ENCODE measurements at regions of chr9 and their contacts with region 1.

Region 1: DNA sequence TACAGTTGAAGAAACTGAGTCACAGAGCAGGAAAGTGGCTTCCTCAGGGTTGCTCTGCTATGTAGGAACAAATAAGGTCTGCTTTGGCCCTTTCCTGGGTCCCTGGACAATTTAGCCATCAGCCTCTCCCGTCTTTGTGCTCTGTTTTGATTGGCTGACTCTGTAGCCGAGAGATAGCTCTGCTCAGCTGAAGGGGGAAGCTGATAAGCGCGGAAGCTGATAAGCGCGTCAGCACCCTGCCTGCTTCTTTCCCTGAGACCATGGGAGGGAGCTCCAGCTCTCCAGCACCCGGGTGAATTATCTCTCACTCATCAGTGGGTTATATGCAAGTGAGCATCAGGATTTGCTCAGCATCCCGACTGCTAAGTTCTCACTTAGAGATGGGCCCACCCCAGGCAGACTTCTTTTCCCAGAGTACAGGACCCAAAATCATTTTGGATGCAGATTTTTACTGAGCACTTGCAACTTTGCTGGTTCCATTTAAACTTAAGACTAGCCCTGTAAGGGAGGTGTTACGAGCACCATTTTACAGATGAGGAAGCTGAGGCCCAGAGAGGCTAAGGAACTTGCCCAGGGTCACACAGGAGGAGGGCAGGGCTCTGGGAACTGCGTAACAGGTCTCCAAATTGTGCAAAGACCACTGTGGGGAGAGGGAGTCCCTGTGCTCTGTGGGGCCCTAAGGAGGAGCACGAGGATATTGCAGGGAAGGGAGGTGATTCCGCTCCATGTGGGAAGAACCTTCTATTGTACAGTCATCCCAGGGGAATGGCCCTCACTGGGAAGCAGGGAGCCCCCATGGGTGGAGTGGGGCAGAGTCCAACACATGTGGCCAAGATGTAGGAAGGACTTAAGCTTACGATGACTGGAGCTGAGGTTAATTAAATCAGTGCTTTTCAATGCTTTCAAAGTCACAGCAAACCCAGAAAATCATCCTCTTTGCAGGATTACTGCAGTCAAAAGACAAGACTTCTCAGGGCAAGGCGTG is 83.7 kb upstream of the ORM1 start:
- DNase-seq: peak; percentile 51
- H3K4me3 ChIP-seq: no peak overlapping the region
- H3K27ac ChIP-seq: no peak overlapping the region
- H3K4me1 ChIP-seq: peaks cover 8% of the 10 kb centered on the region
- H3K27me3 ChIP-seq: no peaks in the 10 kb centered on the region
- CTCF ChIP-seq: peak in 1 of 2 donors; percentile 50
- POLR2A ChIP-seq: no peak

Region 2: GRCh38 chr9:114216081-114216480 is 23.1 kb before region 1 on chr9:
- CTCF ChIA-PET with region 1: interaction called, 12 read pairs
- POLR2A ChIA-PET with region 1: no interaction called
- dilution Hi-C with region 1: no loop called
- intact Hi-C with region 1: no loop called
- DNase-seq: peak; percentile 77
- H3K4me3 ChIP-seq: no peak overlapping the region
- H3K27ac ChIP-seq: no peak overlapping the region
- H3K4me1 ChIP-seq: peaks cover 18% of the 10 kb centered on the region
- H3K27me3 ChIP-seq: no peaks in the 10 kb centered on the region
- CTCF ChIP-seq: no peak
- POLR2A ChIP-seq: no peak

Region 3: DNA sequence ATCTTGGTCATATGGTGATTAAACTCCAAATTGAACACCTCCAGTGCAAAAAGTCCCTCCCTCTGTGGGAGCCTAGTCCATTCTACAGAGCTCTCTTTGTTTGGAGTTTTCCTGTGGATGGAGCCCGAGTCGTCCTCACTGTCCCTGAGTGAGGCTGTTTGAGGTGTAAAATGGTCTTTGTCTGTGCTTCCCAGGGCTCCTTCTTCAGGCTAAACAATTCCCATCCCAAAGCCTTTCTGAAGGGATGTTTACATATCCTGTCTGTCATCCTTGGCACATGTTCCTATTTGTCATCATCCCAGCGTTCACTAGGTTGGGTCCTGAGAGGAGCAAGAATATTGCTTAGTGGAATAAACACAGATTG is 15.0 kb before region 1 on chr9:
- CTCF ChIA-PET with region 1: interaction called, 11 read pairs
- POLR2A ChIA-PET with region 1: no interaction called
- dilution Hi-C with region 1: no loop called
- intact Hi-C with region 1: no loop called
- DNase-seq: peak; percentile 51
- H3K4me3 ChIP-seq: no peak overlapping the region
- H3K27ac ChIP-seq: peak overlapping the region; percentile 91
- H3K4me1 ChIP-seq: peaks cover 69% of the 10 kb centered on the region
- H3K27me3 ChIP-seq: no peaks in the 10 kb centered on the region
- CTCF ChIP-seq: no peak
- POLR2A ChIP-seq: peak; percentile 26

Region 4: GRCh38 chr9:114285166-114285867 is 46.1 kb after region 1 on chr9:
- CTCF ChIA-PET with region 1: interaction called, 37 read pairs
- POLR2A ChIA-PET with region 1: no interaction called
- dilution Hi-C with region 1: no loop called
- intact Hi-C with region 1: loop called (anchors 5 kb)
- DNase-seq: peak; percentile 37
- H3K4me3 ChIP-seq: no peak overlapping the region
- H3K27ac ChIP-seq: no peak overlapping the region
- H3K4me1 ChIP-seq: no peaks in the 10 kb centered on the region
- H3K27me3 ChIP-seq: no peaks in the 10 kb centered on the region
- CTCF ChIP-seq: no peak
- POLR2A ChIP-seq: no peak